GM18951 (cell line): ENCODE measurements at regions of chr15 and their contacts with region 1.

Region 1: DNA sequence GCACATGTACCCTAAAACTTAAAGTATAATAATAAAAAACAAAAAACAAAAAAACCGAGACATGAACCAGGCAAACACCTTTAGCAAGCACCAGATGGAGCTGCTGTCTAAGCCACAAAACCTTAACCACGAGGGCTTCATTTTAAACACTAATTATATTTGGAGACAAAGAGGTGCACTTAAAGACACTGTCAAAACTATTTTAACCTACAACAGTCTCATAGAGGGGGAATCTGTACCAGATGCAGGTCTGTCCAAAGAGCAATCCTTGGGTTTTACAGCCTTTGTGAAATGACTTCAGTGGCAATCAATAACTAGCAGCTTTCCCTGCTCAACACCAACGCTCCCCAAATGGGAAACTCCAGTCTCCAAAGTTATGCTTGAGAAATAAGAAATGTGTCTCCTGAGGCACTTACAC is 115.7 kb upstream of the TSPAN3 start:
- POLR2A ChIP-seq: no peak

Region 2: GRCh38 chr15:77418966-77419835 is 232.6 kb after region 1 on chr15:
- in situ Hi-C with region 1: no loop called
- POLR2A ChIP-seq: no peak

Region 3: GRCh38 chr15:77496710-77497103 is 310.1 kb after region 1 on chr15:
- in situ Hi-C with region 1: loop called (anchors 5 kb)
- POLR2A ChIP-seq: no peak

Region 4: DNA sequence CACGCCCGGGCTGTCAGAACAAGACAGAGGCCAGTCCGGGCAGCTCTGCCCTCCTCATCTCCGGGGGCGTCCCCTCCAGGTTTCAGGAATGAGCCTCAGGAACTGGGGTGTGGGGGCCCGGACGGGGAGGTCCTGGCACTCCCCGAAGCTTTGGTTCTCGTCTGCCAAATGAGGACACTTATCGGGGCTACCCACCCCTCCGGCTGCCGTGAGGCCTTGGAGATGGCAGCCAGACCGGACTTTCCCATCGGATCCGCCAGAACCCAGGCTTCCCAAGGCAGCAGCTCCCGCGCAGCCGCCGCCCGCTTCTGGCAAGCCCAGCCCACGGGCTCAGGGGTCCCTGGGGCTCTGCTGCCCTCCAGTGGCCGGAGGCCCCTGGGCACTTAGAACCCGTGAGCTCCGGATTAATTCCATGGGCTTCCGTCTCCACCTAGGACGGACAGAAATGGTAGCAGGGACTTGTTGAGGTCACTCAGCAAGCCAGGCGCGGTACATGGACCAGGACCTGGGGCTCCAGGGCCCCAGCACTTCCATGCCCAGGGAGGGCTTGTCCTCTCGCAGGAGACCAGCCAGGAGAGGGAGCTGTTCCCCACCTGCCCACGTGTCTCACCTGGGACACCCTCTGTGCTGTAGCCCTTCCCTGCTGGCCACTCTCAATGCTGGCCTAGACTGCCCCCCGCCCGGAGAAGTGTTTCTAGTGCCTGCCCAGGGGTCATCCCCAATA is 356.7 kb after region 1 on chr15:
- in situ Hi-C with region 1: no loop called
- POLR2A ChIP-seq: peak; percentile 48